Stomach (tissue), 19 donors: ENCODE measurements at regions of chr7 and their contacts with region 1.

Region 1: GRCh38 chr7:149005241-149006050 is 22.9 kb downstream of the PDIA4 start:
- DNase-seq: peak; percentile 88 to 92
- H3K4me3 ChIP-seq: no peak overlapping the region
- H3K27ac ChIP-seq: no peak overlapping the region
- H3K4me1 ChIP-seq: peaks cover 0 to 13% (median 0%) of the 10 kb centered on the region in 4 donors
- H3K27me3 ChIP-seq: no peaks in the 10 kb centered on the region
- CTCF ChIP-seq: peak in 5 of 7 experiments; percentile 62 to 86 (median 78)
- EP300 ChIP-seq: no peak
- POLR2A ChIP-seq: no peak

Region 2: GRCh38 chr7:149067876-149068275 is 62.4 kb after region 1 on chr7:
- intact Hi-C with region 1: loop called (anchors 10 kb)
- DNase-seq: no peak
- H3K4me3 ChIP-seq: no peak overlapping the region
- H3K27ac ChIP-seq: no peak overlapping the region
- H3K4me1 ChIP-seq: peaks cover 0 to 11% (median 3%) of the 10 kb centered on the region in 4 donors
- H3K27me3 ChIP-seq: no peaks in the 10 kb centered on the region
- CTCF ChIP-seq: no peak
- EP300 ChIP-seq: no peak
- POLR2A ChIP-seq: no peak

Region 3: DNA sequence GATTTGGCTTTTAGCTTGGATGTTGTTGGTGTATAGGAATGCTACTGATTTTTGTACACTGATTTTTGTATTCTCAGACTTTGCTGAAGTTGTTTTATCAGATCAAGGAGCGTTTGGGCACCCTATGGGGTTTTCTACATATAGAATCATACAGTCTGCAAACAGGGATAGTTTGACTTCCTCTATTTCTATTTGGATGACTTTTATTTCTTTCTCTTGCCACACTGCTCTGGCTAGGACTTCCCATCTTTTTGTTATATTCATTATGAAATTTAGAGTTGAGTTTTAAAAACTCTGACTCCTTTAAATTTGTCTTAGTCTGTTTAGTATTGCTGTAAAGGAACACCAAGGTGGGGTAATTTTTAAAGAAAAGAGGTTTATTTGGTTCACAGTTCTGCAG is 80.4 kb after region 1 on chr7:
- intact Hi-C with region 1: loop called (anchors 5 kb)
- DNase-seq: no peak
- H3K4me3 ChIP-seq: no peak overlapping the region
- H3K27ac ChIP-seq: no peak overlapping the region
- H3K4me1 ChIP-seq: peaks cover 5 to 15% (median 9%) of the 10 kb centered on the region in 4 donors
- H3K27me3 ChIP-seq: no peaks in the 10 kb centered on the region
- CTCF ChIP-seq: no peak
- EP300 ChIP-seq: no peak
- POLR2A ChIP-seq: no peak